Astrocyte of the cerebellum (primary cell): ENCODE measurements at regions of chr1 and their contacts with region 1.

Region 1: GRCh38 chr1:59015708-59016107 is 231.9 kb upstream of the JUN start:
- DNase-seq: no peak
- H3K4me3 ChIP-seq: no peak overlapping the region
- CTCF ChIP-seq: no peak

Region 2: DNA sequence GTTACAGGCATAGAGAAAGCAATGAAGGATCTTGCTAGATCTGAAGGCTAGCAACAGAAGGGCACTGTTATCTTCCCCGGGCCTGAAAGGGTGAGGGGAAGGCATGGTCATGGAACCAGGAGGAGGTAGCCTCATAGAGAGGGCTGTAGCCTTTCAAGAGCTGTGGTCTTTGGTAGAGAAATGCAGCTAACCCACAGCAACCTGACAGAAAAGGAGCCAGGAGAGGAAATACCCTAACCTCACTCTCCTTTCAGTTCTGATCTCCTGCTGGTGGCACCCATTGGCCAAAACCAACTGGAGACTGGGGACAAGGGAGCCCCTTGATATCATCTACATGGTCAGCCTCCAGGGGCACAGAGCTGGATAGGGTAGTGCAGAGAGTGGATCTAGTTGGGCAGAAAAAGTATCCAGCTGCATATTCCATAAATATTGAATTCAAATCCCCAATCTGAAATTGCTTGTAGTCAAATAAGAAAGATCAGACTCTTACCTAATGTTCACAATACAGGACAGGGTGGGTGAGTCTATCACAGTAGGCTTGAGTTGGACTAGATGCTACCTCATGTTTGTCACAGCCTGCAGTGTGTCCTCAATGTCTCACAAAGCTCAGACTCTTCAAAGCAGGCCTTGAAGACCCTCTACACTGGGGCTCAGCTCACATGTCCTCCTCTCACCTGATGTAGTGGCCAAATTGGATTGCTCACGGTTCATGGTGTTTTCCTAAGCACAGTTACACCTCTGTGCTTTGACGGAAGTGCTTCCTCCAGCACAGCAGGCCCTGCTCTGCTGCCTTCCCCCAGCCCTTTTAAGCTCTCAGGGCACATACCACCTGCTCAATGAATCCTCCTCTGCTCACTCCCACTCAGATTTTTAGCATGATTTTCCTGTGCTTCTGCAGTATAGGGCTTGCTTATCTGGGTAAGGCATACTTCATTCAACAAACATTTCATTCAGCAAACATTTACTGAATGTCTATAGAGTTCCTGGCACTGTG is 157.7 kb before region 1 on chr1:
- in situ Hi-C with region 1: no loop called
- DNase-seq: no peak
- H3K4me3 ChIP-seq: no peak overlapping the region
- CTCF ChIP-seq: no peak

Region 3: DNA sequence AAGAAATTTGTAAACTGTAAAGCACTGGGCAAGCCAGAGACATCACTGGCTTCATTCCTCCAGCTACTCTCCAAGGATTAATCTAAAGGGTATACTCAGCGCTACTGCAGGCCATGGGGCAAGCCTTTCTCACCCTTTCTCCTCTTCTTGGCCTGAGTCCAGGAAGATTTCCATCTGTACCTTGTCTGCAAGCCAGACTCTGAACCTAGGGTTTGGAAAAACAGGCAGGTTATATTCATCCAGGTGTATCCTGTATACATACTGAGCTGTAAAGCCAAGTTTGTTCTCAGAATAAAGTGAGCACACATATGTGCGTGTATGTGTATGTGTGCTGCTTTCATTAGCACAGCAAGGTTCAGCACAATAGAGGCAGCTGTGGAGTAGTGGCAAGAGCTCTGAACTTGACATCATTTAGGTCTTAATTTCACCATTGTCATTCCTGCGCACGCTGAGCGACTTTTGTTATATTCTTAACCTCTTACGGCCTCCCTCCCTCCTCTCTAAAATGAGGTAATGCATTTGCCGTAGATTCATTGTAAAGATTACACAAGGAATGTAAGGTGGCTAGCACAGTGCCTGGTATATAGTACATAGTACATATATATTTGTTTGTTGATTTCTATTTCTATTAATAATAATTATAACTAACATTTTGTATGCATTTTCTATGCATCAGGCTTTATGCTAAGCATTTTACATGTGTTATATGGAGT is 103.7 kb before region 1 on chr1:
- in situ Hi-C with region 1: loop called (anchors 5 kb)
- DNase-seq: no peak
- H3K4me3 ChIP-seq: no peak overlapping the region
- CTCF ChIP-seq: no peak

Region 4: GRCh38 chr1:59076612-59077011 is 60.9 kb after region 1 on chr1:
- in situ Hi-C with region 1: no loop called
- DNase-seq: no peak
- H3K4me3 ChIP-seq: no peak overlapping the region
- CTCF ChIP-seq: peak; percentile 28

Region 5: GRCh38 chr1:59116920-59117542 is 101.3 kb after region 1 on chr1:
- in situ Hi-C with region 1: no loop called
- DNase-seq: no peak
- H3K4me3 ChIP-seq: no peak overlapping the region
- CTCF ChIP-seq: no peak